Calu3 (cell line): ENCODE measurements at regions of chr1 and their contacts with region 1.

Region 1: DNA sequence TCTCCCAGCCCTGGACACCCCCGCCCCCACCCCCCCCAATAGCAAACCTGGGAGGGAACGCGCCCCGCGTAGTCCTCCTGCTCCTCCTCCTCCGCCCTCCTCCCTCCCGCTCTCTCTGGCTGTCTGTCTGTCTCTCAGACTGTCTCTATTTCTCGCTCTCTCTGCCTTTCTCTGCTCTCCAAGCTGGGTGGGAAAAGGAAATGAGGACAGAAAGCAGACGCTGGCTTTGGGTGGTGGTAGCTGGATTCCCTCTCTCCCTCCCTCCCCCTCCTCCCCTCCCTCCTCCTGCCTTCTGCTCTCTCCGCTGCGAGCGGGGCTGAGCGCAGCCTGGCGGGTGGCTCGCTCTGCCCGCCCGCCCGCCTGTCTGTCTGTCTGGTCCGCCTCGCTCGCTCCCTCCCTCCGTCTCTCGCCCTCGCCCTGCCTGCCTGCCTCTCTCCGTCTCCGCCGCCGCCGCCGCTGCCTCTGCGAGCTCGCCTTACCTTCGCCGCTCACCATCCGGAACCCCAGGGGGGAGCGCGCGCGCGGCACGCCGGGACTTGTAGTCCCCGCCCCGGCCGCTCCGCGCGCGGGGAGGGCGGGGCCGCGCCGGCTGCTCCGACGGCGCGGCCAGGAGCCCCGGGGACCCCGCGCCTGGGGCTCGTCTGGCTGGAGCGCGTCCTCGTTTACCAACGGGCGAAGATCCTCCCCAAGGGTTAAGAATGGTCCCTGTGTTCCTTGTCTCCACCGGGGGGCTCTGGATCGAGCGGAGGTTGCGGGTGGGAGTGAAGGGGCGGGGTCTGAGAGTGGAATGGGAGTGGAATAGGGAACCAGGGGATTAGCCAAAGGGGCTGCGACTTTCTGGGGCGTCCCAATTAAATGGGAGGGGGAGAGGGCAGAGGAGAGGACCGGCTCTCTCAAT is at the start of gene AHDC1:
- DNase-seq: peak; percentile 87
- H3K4me3 Mint-ChIP-seq: peak within 1 kb of the TSS; percentile 78
- H3K27ac Mint-ChIP-seq: peak within 1 kb of the TSS; percentile 48
- H3K4me1 Mint-ChIP-seq: peaks cover 42% of the 10 kb centered on the region
- H3K27me3 Mint-ChIP-seq: no peaks in the 10 kb centered on the region
- CTCF ChIP-seq: no peak
- total RNA-seq, gene AHDC1: 20.8 and 21.5 TPM in 2 replicates

Region 2: GRCh38 chr1:27402349-27402754 is 201.6 kb before region 1 on chr1:
- CTCF ChIA-PET with region 1: no interaction called
- intact Hi-C with region 1: loop called (anchors 5 kb)
- DNase-seq: peak; percentile 65
- H3K4me3 Mint-ChIP-seq: no peak overlapping the region
- H3K27ac Mint-ChIP-seq: no peak overlapping the region
- H3K4me1 Mint-ChIP-seq: no peaks in the 10 kb centered on the region
- H3K27me3 Mint-ChIP-seq: no peaks in the 10 kb centered on the region
- CTCF ChIP-seq: peak; percentile 11

Region 3: DNA sequence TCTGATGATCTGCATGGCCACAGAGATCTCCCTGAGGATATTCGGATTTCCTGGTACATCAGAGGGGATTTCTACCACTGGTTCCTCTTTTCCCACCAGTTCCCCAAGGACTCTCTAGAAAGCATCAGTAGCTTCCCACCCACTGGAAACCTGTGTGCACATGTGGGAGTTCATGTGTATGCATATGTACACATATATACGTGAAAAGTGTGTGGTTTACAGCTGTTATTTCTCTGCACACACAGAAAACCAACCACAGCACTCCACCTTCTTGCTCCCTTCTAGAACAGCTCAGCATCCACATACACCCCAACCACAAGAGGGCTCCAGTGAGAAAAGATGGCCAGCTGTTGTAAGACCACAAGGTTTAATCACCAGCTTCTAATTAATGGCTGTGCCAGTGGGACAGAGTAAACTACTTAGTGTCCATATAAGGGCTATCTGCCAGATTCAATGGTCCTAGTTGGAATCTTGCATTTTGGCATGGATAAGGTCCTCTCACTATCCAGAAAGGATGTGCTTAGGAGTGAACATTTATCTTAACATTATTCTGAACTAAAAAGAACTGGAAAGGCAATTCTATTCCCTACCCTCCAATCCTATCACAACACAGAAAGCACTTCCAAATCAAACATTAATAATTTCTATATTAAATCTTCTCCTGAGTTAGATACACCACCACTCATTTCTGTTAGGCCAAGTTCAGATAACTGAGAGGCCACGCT is 187.4 kb before region 1 on chr1:
- CTCF ChIA-PET with region 1: interaction called, 5 read pairs
- intact Hi-C with region 1: loop called (anchors 5 kb)
- DNase-seq: peak; percentile 56
- H3K4me3 Mint-ChIP-seq: no peak overlapping the region
- H3K27ac Mint-ChIP-seq: no peak overlapping the region
- H3K4me1 Mint-ChIP-seq: peaks cover 18% of the 10 kb centered on the region
- H3K27me3 Mint-ChIP-seq: no peaks in the 10 kb centered on the region
- CTCF ChIP-seq: peak; percentile 48

Region 4: GRCh38 chr1:27662707-27663393 is 58.9 kb after region 1 on chr1:
- CTCF ChIA-PET with region 1: interaction called, 5 read pairs
- intact Hi-C with region 1: loop called (anchors 1 kb)
- DNase-seq: peak; percentile 80
- H3K4me3 Mint-ChIP-seq: no peak overlapping the region
- H3K27ac Mint-ChIP-seq: peak overlapping the region; percentile 82
- H3K4me1 Mint-ChIP-seq: peaks cover 27% of the 10 kb centered on the region
- H3K27me3 Mint-ChIP-seq: no peaks in the 10 kb centered on the region
- CTCF ChIP-seq: peak; percentile 76